ENCODE measurements at regions of chr5 and their contacts with region 1.

Region 1: GRCh38 chr5:80093796-80094195 is 58.6 kb downstream of the THBS4 start:
- DNase-seq: no peak
- ATAC-seq: no peak
- H3K4me3 ChIP-seq: no peak overlapping the region
- H3K27ac ChIP-seq: no peak overlapping the region
- H3K4me1 ChIP-seq: no peaks in the 10 kb centered on the region
- H3K27me3 ChIP-seq: no peaks in the 10 kb centered on the region
- CTCF ChIP-seq: no peak
- EP300 ChIP-seq: no peak
- POLR2A ChIP-seq: no peak
- RAD21 ChIP-seq: no peak

Region 2: GRCh38 chr5:79886925-79887655 is 206.7 kb before region 1 on chr5:
- CTCF ChIA-PET with region 1: no interaction called
- POLR2A ChIA-PET with region 1: no interaction called
- RAD21 ChIA-PET with region 1: no interaction called
- SMC1A ChIA-PET with region 1: no interaction called
- in situ Hi-C with region 1: no loop called
- intact Hi-C with region 1: no loop called
- DNase-seq: peak; percentile 7
- ATAC-seq: no peak
- H3K4me3 ChIP-seq: no peak overlapping the region
- H3K27ac ChIP-seq: no peak overlapping the region
- H3K4me1 ChIP-seq: no peaks in the 10 kb centered on the region
- H3K27me3 ChIP-seq: no peaks in the 10 kb centered on the region; a peak in 1 of 4 replicates
- CTCF ChIP-seq: no peak
- EP300 ChIP-seq: no peak
- POLR2A ChIP-seq: no peak
- RAD21 ChIP-seq: no peak

Region 3: DNA sequence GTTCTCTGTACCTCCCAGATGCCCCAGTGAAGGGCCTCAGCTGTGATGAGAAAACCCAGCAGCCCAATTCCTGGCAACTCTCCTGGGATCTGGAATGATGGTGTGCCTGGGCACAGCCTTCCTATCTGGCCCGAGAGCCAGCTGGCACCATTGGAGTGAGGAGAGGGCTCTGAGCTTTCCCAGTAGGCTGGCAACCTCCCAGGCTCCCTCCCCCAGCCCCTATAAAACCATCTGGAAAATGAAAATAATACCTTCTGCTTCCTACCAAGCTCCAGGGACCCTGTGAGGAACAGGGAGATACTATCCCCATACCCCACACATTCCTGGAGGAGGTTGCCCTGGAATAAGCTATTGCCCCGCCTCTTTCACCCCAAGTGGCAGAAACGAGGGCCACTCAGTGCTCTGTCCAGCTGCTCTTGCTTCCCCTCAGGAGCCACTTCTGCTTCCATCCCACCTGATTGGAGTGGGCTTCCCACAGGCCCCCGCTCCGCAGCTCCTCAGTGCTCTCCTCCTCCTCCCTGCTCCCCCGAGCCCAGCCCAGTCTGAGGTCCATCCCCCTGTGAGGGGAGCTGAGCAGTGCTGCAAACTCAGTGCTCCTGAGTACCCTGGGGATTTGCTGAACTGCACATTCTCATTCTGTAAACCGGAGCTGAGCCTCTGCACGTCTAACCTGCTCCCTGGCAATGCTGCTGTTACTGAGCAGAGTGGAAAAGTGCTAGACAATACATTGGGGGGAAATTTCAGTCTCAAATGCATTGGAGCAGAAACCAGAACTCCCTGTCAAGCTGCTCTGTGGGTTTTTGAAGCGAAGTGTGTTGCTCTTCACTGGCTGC is 16.1 kb after region 1 on chr5:
- CTCF ChIA-PET with region 1: interaction called, 17 read pairs
- POLR2A ChIA-PET with region 1: no interaction called
- RAD21 ChIA-PET with region 1: interaction called, 10 read pairs
- SMC1A ChIA-PET with region 1: interaction called, 10 read pairs
- in situ Hi-C with region 1: no loop called
- intact Hi-C with region 1: no loop called
- DNase-seq: peak; percentile 52
- ATAC-seq: peak; percentile 86
- H3K4me3 ChIP-seq: no peak overlapping the region
- H3K27ac ChIP-seq: no peak overlapping the region
- H3K4me1 ChIP-seq: peaks cover 11% of the 10 kb centered on the region
- H3K27me3 ChIP-seq: no peaks in the 10 kb centered on the region
- CTCF ChIP-seq: no peak
- EP300 ChIP-seq: no peak
- POLR2A ChIP-seq: no peak
- RAD21 ChIP-seq: no peak

Region 4: GRCh38 chr5:80204808-80205614 is 111.2 kb after region 1 on chr5:
- CTCF ChIA-PET with region 1: interaction called, 4 read pairs
- POLR2A ChIA-PET with region 1: no interaction called
- RAD21 ChIA-PET with region 1: interaction called, 14 read pairs
- SMC1A ChIA-PET with region 1: interaction called, 11 read pairs
- in situ Hi-C with region 1: no loop called
- intact Hi-C with region 1: no loop called
- DNase-seq: no peak
- ATAC-seq: no peak
- H3K4me3 ChIP-seq: no peak overlapping the region
- H3K27ac ChIP-seq: no peak overlapping the region
- H3K4me1 ChIP-seq: no peaks in the 10 kb centered on the region
- H3K27me3 ChIP-seq: no peaks in the 10 kb centered on the region
- CTCF ChIP-seq: peak in 1 of 3 experiments; percentile 7; a peak in 1 of 6 replicates
- EP300 ChIP-seq: no peak
- POLR2A ChIP-seq: no peak
- RAD21 ChIP-seq: peak; percentile 25; the same call in 1 of the 2 replicates

Region 5: GRCh38 chr5:80225189-80225933 is 131.6 kb after region 1 on chr5:
- CTCF ChIA-PET with region 1: no interaction called
- POLR2A ChIA-PET with region 1: no interaction called
- RAD21 ChIA-PET with region 1: no interaction called
- SMC1A ChIA-PET with region 1: no interaction called
- in situ Hi-C with region 1: no loop called
- intact Hi-C with region 1: no loop called
- DNase-seq: no peak
- ATAC-seq: no peak
- H3K4me3 ChIP-seq: no peak overlapping the region
- H3K27ac ChIP-seq: no peak overlapping the region
- H3K4me1 ChIP-seq: no peaks in the 10 kb centered on the region
- H3K27me3 ChIP-seq: no peaks in the 10 kb centered on the region
- CTCF ChIP-seq: no peak
- EP300 ChIP-seq: no peak
- POLR2A ChIP-seq: no peak
- RAD21 ChIP-seq: no peak

Region 6: DNA sequence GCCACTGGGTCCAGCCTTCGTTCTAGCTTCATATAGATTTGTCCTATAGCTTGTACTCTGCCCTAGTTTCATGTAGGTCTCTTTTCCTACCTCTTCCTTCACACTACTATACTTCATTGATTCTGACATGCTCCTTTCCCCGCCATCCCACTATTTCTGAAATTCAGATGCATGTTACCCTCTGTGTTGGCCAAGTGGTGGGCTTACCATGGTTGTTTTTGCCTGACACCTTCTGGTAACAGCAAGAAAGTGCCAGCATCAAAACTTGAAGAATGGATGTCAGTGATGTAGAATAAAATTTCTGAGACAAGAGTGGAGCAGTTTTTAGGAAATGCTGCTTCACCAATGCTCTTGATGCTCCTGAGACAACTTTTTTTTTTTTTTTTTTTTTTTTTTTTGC is 181.6 kb after region 1 on chr5:
- CTCF ChIA-PET with region 1: interaction called, 168 read pairs
- POLR2A ChIA-PET with region 1: interaction called, 8 read pairs
- RAD21 ChIA-PET with region 1: interaction called, 114 read pairs
- SMC1A ChIA-PET with region 1: interaction called, 89 read pairs
- in situ Hi-C with region 1: no loop called
- intact Hi-C with region 1: loop called (anchors 1 kb)
- DNase-seq: no peak
- ATAC-seq: peak; percentile 80
- H3K4me3 ChIP-seq: no peak overlapping the region
- H3K27ac ChIP-seq: no peak overlapping the region
- H3K4me1 ChIP-seq: no peaks in the 10 kb centered on the region
- H3K27me3 ChIP-seq: no peaks in the 10 kb centered on the region
- CTCF ChIP-seq: peak; percentile 52 to 73 (median 60); a peak in 4 of 6 replicates
- EP300 ChIP-seq: no peak
- POLR2A ChIP-seq: no peak
- RAD21 ChIP-seq: peak; percentile 92

Region 7: GRCh38 chr5:80308526-80308925 is 214.7 kb after region 1 on chr5:
- CTCF ChIA-PET with region 1: interaction called, 230 read pairs
- POLR2A ChIA-PET with region 1: no interaction called
- RAD21 ChIA-PET with region 1: interaction called, 205 read pairs
- SMC1A ChIA-PET with region 1: interaction called, 146 read pairs
- in situ Hi-C with region 1: no loop called
- intact Hi-C with region 1: loop called (anchors 1 kb)
- DNase-seq: no peak
- ATAC-seq: no peak
- H3K4me3 ChIP-seq: no peak overlapping the region
- H3K27ac ChIP-seq: no peak overlapping the region
- H3K4me1 ChIP-seq: no peaks in the 10 kb centered on the region
- H3K27me3 ChIP-seq: no peaks in the 10 kb centered on the region; a peak in 1 of 4 replicates
- CTCF ChIP-seq: no peak
- EP300 ChIP-seq: no peak
- POLR2A ChIP-seq: no peak
- RAD21 ChIP-seq: no peak

Region 8: DNA sequence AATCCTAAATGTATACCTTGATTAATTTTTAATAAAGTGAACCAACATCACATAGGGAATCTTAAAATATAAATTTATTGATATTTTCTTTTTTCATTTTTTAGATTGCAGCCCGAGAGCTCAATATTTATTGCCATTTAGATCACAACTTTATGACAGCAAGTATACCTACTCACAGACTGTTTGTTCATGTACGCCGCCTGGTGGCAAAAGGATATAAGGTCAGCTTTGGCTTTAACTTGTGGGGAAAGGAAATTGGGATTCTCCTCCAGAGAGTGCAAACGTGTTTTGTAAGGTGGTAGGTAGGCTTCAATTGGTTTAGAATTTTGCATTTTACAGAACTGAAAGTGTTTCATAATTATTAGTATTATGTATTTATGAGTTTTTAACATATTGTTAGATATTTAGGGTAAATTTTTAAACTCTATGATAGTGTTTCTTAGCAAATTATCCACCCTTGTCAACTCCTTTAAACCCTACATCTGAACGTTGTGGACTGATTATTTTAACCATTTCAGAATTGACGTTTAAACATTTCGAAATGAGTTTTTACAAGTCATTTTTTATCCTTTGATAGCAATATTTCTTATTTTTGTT is 578.4 kb after region 1 on chr5:
- CTCF ChIA-PET with region 1: interaction called, 9 read pairs
- POLR2A ChIA-PET with region 1: no interaction called
- RAD21 ChIA-PET with region 1: interaction called, 6 read pairs
- SMC1A ChIA-PET with region 1: interaction called, 3 read pairs
- in situ Hi-C with region 1: loop called (anchors 5 kb)
- intact Hi-C with region 1: loop called (anchors 5 kb)
- DNase-seq: peak; percentile 28
- ATAC-seq: peak; percentile 64
- H3K4me3 ChIP-seq: no peak overlapping the region
- H3K27ac ChIP-seq: no peak overlapping the region
- H3K4me1 ChIP-seq: no peaks in the 10 kb centered on the region; the same call in 1 of the 2 replicates
- H3K27me3 ChIP-seq: no peaks in the 10 kb centered on the region
- CTCF ChIP-seq: peak; percentile 78 to 88 (median 85)
- EP300 ChIP-seq: no peak
- POLR2A ChIP-seq: no peak
- RAD21 ChIP-seq: peak; percentile 87